ENCODE measurements at regions of chr2 and their contacts with region 1.

Region 1: DNA sequence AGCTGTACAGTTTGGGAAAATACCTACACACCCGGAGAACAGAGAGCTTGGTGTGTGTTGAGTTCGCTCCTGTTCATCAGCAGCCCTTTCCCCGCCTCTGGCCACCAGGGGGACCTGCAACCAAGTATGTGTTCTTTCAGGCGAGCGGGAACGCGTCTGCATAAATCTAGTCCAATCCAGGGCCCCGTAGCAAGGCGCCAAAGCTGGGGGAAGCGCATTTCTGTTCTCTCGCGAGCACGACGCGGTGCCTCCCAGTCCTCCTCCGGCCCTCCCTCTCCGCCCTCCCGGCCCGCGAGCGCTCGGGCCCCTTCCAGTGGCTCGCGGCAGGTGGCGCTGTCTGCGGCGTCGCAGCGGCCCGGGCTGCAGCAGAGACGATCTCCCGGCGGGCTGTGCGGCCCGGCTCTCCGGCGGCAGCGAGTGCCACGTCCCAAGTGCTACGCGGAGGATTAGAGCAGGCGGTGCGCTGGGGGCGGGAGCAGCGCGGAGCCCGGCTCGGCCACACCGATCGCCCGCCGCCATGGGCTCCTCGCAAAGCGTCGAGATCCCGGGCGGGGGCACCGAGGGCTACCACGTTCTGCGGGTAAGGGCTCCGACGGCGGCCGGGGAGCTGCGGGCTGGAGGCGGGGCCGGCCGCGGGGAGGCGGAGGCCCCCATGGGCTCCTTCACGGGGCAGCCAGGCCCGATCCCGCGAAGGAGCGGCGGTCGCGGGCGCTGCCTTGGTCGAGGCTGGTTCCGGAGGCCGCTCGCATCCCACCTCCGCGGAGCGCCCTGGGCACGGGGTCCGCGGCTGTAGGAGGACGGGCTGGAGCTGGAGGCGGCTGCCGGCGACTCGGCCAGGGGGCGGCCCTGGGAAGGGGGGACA is at the start of gene GORASP2:
- DNase-seq: peak; percentile 99
- H3K4me3 Mint-ChIP-seq: peak within 1 kb of the TSS; percentile 98
- H3K27ac Mint-ChIP-seq: peak within 1 kb of the TSS; percentile 96
- H3K4me1 Mint-ChIP-seq: peaks cover 39% of the 10 kb centered on the region
- H3K27me3 Mint-ChIP-seq: no peaks in the 10 kb centered on the region
- total RNA-seq, gene GORASP2: 57.1 to 60.2 TPM

Region 2: GRCh38 chr2:170505631-170506275 is 423.3 kb before region 1 on chr2:
- CTCF ChIA-PET with region 1: no interaction called
- intact Hi-C with region 1: no loop called
- DNase-seq: no peak
- H3K4me3 Mint-ChIP-seq: no peak overlapping the region
- H3K27ac Mint-ChIP-seq: no peak overlapping the region
- H3K4me1 Mint-ChIP-seq: peaks cover 27% of the 10 kb centered on the region
- H3K27me3 Mint-ChIP-seq: peaks cover 1% of the 10 kb centered on the region

Region 3: DNA sequence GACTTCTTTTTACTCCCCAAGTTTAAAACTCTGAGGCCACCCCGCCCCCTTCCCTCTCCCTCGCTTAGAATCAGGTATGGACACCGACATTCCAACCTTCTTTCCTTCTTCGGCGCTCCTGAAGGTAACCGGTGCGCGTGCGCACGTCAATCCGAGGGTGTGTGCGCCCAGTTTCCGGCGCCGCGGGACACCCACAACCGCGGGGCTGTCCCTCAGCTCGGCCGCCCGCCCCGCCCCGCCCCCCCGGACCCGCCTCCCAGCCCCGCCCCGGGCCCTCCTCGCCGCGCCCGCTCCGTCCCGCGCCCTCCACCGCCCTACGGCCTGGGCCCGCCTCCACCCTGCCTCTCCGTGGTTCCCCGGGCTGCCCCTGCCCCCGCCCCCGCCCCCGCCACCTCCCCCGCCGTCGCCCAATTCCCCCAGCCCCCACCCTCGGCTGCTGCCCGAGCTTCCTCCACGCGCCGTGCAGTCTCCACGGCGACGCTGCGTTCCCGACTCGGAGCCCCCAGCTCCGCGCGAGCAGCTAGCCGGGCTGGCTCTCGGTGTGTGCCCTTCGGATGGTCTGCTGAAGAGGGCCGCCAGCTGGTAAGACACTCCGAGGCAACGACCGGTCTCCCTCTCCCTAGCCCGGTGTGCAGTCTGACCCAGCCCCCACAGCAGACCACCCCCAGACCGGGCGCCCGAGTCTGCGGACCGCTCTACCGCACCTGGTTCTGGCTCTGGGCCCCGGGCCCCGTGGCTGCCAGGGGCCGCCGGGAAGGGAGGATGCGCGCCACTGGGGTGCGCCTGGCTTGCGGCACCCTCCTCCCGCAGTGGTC is 158.2 kb before region 1 on chr2:
- CTCF ChIA-PET with region 1: no interaction called
- intact Hi-C with region 1: loop called (anchors 1 kb)
- DNase-seq: peak; percentile 69
- H3K4me3 Mint-ChIP-seq: peak overlapping the region; percentile 85
- H3K27ac Mint-ChIP-seq: no peak overlapping the region
- H3K4me1 Mint-ChIP-seq: peaks cover 7% of the 10 kb centered on the region
- H3K27me3 Mint-ChIP-seq: peaks cover 9% of the 10 kb centered on the region

Region 4: DNA sequence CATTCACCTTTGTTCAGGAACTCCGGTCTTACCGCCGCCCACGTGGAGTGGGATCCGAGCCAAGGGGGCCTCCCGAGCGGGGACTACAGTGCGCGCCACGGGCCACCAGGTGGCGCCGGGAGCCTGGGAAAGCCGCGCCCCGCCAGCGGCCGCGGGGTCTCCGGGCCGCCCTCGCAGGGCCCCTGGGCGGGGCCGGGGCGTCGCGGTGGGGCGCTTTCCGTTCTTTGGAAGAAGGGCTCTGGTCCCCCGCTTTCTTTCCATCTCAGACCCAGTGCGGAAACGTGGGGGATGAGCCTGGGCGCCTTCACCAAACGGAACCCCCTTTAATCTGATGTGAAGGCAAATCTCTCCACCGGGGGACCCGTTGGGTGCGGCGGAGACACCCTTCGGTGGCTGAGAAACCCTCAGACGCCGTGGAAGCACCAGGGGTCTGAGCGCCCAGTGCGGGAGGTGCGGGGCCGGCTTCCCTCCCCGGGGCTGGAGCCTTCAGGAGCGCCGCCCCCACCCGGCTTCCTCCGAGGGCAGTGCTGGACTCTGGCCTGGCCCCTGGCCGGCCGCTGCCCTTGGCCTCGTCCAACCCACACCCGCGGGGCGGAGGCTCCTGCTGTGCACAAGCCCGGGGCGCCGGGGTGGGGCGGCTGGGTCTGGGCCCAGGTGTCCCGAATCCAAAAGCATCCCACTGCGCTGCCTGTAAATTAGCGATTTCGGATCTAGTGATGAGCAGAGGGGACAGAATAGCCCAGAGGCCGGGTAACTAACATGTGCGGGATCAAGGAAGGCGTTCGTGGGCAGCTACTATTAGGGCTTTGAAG is 44.6 kb after region 1 on chr2:
- CTCF ChIA-PET with region 1: interaction called, 10 read pairs
- intact Hi-C with region 1: loop called (anchors 1 kb)
- DNase-seq: peak; percentile 92
- H3K4me3 Mint-ChIP-seq: peak overlapping the region; percentile 66
- H3K27ac Mint-ChIP-seq: peak overlapping the region; percentile 48
- H3K4me1 Mint-ChIP-seq: peaks cover 9% of the 10 kb centered on the region
- H3K27me3 Mint-ChIP-seq: no peaks in the 10 kb centered on the region

Region 5: GRCh38 chr2:171244970-171245782 is 316.1 kb after region 1 on chr2:
- CTCF ChIA-PET with region 1: no interaction called
- intact Hi-C with region 1: loop called (anchors 2 kb)
- DNase-seq: peak; percentile 32
- H3K4me3 Mint-ChIP-seq: no peak overlapping the region
- H3K27ac Mint-ChIP-seq: no peak overlapping the region
- H3K4me1 Mint-ChIP-seq: peaks cover 40% of the 10 kb centered on the region
- H3K27me3 Mint-ChIP-seq: no peaks in the 10 kb centered on the region

Region 6: GRCh38 chr2:171433763-171434670 is 505.0 kb after region 1 on chr2 and contains the starts of genes DCAF17 and METTL8:
- CTCF ChIA-PET with region 1: interaction called, 6 read pairs
- intact Hi-C with region 1: loop called (anchors 1 kb)
- DNase-seq: peak; percentile 96
- H3K4me3 Mint-ChIP-seq: peak within 1 kb of the TSS; percentile 86
- H3K27ac Mint-ChIP-seq: peak within 1 kb of the TSS; percentile 94
- H3K4me1 Mint-ChIP-seq: peaks cover 54% of the 10 kb centered on the region
- H3K27me3 Mint-ChIP-seq: no peaks in the 10 kb centered on the region
- total RNA-seq, gene DCAF17: 21.1 to 21.3 TPM
- total RNA-seq, gene METTL8: 32.9 to 34.5 TPM

Region 7: DNA sequence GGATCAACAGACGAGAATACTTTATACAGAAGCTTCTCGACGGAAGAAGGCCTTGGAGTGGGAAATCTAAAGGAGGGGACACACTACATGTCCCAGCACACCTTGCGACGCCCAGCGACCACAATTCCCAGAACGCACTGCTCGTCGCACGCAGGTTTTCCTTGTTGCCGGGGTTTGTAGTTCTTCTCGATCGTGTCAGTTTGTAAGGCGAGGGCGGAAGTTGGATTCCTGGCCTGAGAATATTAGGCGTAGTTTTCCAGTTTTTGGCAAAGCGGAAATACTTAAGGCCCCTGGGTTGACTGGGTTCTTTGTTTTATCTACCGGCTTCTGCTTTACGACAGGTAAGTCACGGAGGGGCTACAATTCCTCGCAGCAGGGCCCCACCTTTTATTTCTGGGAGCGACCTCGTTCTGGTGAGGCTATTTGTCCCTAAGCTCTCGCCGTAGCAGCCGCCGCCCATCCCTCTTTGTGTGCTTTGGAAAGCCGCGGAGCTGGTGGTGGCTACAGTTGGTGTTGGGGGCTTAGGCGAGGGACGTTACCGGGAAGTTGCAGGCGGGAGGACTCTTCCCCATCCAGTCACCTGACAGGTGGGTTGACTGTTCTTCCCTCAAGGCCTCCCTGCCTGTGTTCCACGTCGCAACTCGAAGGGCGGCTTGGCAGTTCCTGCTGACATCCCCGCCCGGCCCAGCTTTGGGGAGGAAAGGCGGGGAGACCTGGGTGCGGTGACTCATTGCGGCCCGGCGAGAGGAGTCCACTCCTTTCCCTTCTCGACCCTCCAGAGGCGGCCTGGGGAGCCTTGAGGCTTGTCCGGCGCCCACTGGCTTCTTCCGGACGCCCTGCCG is 758.5 kb after region 1 on chr2 and contains the start of gene DYNC1I2:
- CTCF ChIA-PET with region 1: no interaction called
- intact Hi-C with region 1: loop called (anchors 1 kb)
- DNase-seq: peak; percentile 88
- H3K4me3 Mint-ChIP-seq: peak within 1 kb of the TSS; percentile 84
- H3K27ac Mint-ChIP-seq: peak within 1 kb of the TSS; percentile 85
- H3K4me1 Mint-ChIP-seq: peaks cover 15% of the 10 kb centered on the region
- H3K27me3 Mint-ChIP-seq: no peaks in the 10 kb centered on the region
- total RNA-seq, gene DYNC1I2: 37.8 to 38.9 TPM

Region 8: GRCh38 chr2:172102391-172103278 is 1173.6 kb after region 1 on chr2 and contains the start of gene DLX2:
- CTCF ChIA-PET with region 1: no interaction called
- intact Hi-C with region 1: loop called (anchors 2 kb)
- DNase-seq: peak; percentile 74
- H3K4me3 Mint-ChIP-seq: peak within 1 kb of the TSS; percentile 76
- H3K27ac Mint-ChIP-seq: peak within 1 kb of the TSS; percentile 24
- H3K4me1 Mint-ChIP-seq: peaks cover 50% of the 10 kb centered on the region
- H3K27me3 Mint-ChIP-seq: peaks cover 71% of the 10 kb centered on the region
- total RNA-seq, gene DLX2: not detected